CD8-positive, alpha-beta T cell (primary cell): ENCODE measurements at regions of chr11 and their contacts with region 1.

Region 1: DNA sequence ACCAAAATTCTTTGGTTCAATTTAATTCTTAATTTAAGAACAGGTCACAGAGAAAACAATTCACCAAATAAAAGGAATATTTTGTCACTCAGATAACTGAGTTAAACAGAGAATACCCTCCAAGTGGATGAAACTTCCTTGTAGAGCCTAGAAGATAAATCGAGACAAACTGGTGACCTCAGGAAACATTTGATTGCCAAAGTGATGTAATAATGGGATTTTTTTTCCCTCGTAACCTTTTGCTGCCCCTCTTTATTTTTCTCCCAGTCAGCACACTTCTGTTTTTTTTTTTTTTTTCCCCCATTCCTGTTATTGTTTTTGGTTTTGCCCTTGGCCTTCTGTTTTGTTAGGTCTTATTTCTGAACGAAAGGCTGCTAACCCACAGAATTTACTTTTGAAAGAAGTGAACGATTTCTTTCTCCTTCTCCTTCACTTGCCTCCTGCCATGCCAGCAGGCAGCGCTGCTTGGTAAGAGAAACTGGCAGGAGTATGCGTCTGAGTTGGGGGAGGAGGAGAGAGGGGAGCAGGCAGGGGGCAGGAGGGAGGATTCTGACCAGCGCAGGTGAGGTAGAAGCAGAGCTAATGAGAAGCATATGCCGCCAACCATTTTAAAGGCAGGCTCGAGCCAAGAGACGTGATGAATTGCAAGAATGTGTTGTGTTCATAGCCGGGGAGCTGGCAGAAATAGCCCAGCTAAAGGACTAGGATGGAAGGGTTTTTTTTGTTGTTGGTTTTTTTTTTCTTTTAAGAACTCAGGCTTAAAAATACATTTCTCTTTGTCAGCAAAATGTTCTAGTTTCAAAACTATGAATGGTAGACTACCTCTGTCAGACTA is 121.9 kb upstream of the MTMR2 start:
- DNase-seq: no peak
- ATAC-seq: no peak
- H3K4me3 ChIP-seq: no peak overlapping the region
- H3K4me3 Mint-ChIP-seq: no peak overlapping the region
- H3K27ac ChIP-seq: no peak overlapping the region
- H3K27ac Mint-ChIP-seq: peak overlapping the region; percentile 52
- H3K4me1 ChIP-seq: peaks cover 5% of the 10 kb centered on the region
- H3K4me1 Mint-ChIP-seq: peaks cover 50% of the 10 kb centered on the region
- H3K27me3 ChIP-seq: no peaks in the 10 kb centered on the region
- H3K27me3 Mint-ChIP-seq: no peaks in the 10 kb centered on the region
- CTCF ChIP-seq: no peak

Region 2: GRCh38 chr11:95972060-95972459 is 73.8 kb before region 1 on chr11:
- CTCF ChIA-PET with region 1: no interaction called
- POLR2A ChIA-PET with region 1: no interaction called
- intact Hi-C with region 1: loop called in 1 of 2 experiments (anchors 5 kb)
- DNase-seq: no peak
- ATAC-seq: no peak
- H3K4me3 ChIP-seq: no peak overlapping the region
- H3K4me3 Mint-ChIP-seq: no peak overlapping the region
- H3K27ac ChIP-seq: no peak overlapping the region
- H3K27ac Mint-ChIP-seq: no peak overlapping the region
- H3K4me1 ChIP-seq: no peaks in the 10 kb centered on the region
- H3K4me1 Mint-ChIP-seq: no peaks in the 10 kb centered on the region
- H3K27me3 ChIP-seq: no peaks in the 10 kb centered on the region
- H3K27me3 Mint-ChIP-seq: no peaks in the 10 kb centered on the region
- CTCF ChIP-seq: no peak